GM12878 (cell line): ENCODE measurements at regions of chr10 and their contacts with region 1.

Region 1: DNA sequence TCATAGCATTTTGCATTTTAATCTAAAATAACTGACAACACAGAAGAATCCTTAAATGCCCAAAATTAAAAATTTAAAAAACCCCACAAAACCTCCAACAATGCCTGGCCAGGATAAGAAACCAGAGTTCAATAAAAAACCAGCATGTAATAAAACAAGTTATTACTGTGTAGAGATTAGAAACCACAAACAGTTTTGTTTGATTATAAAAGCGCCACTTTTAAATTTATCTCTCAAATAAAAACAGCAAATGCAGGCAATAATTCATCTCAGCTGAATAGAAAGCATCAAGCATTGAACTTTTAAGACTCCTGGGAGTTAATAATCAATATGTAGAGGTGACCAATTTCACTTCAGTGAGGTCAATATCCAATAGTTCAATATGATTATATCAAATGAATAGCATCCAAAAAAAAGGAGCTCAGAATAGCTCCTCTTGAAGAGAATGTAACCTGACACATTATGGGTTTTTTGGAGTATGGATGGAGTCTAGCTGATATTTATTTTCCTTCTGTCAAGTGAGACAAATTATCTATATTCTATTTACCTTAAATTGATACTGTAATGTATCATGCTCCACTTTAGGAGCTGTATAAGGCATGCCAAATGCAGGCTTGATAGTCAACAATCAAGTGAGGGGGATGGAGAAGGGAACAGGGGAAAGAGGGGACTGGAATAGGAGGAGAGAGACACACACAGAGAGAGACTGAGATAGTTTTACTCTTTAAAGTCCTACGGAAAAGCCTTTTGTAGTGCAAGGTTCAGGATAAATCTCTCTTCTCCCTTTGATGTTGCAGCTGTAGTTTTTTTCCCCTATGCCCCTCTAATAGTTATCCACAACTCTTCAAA is 130.9 kb downstream of the RSU1 start:
- DNase-seq: no peak
- ATAC-seq: no peak
- H3K4me3 ChIP-seq: no peak overlapping the region
- H3K27ac ChIP-seq: no peak overlapping the region
- H3K4me1 ChIP-seq: no peaks in the 10 kb centered on the region
- H3K27me3 ChIP-seq: no peaks in the 10 kb centered on the region
- CTCF ChIP-seq: no peak
- EP300 ChIP-seq: no peak
- POLR2A ChIP-seq: no peak
- RAD21 ChIP-seq: no peak

Region 2: DNA sequence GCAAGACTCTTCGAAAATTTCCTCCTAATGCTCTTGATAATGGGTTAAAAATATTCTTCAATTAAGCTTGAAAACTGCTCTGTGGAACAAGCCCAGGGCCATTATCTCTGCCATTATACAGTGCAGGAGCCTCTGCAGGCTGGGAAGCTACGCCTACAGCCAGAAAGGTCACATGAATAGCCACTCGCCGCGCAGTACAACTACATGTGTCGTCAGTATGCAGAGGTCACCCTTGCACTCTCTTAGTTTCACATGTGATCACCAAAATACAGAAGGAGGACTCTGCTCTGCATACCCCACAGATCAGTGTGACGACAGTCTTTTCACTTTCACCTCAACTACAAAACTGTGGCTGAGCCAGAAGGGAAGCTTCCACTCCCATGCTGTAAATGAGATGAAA is 22.8 kb before region 1 on chr10:
- CTCF ChIA-PET with region 1: interaction called, 3 read pairs
- POLR2A ChIA-PET with region 1: no interaction called
- RAD21 ChIA-PET with region 1: no interaction called
- SMC1A ChIA-PET with region 1: interaction called, 3 read pairs
- in situ Hi-C with region 1: no loop called
- intact Hi-C with region 1: loop called (anchors 2 kb)
- DNase-seq: no peak
- ATAC-seq: no peak
- H3K4me3 ChIP-seq: no peak overlapping the region
- H3K27ac ChIP-seq: no peak overlapping the region
- H3K4me1 ChIP-seq: no peaks in the 10 kb centered on the region; the same call in 1 of the 2 replicates
- H3K27me3 ChIP-seq: no peaks in the 10 kb centered on the region
- CTCF ChIP-seq: no peak
- EP300 ChIP-seq: no peak
- POLR2A ChIP-seq: no peak
- RAD21 ChIP-seq: no peak